OCI-LY7 (cell line): ENCODE measurements at regions of chr2 and their contacts with region 1.

Region 1: GRCh38 chr2:135573620-135574019 is 42.3 kb downstream of the R3HDM1 start:
- DNase-seq: no peak
- H3K4me3 ChIP-seq: no peak overlapping the region
- H3K27ac ChIP-seq: no peak overlapping the region
- H3K4me1 ChIP-seq: no peaks in the 10 kb centered on the region
- CTCF ChIP-seq: peak; percentile 61

Region 2: DNA sequence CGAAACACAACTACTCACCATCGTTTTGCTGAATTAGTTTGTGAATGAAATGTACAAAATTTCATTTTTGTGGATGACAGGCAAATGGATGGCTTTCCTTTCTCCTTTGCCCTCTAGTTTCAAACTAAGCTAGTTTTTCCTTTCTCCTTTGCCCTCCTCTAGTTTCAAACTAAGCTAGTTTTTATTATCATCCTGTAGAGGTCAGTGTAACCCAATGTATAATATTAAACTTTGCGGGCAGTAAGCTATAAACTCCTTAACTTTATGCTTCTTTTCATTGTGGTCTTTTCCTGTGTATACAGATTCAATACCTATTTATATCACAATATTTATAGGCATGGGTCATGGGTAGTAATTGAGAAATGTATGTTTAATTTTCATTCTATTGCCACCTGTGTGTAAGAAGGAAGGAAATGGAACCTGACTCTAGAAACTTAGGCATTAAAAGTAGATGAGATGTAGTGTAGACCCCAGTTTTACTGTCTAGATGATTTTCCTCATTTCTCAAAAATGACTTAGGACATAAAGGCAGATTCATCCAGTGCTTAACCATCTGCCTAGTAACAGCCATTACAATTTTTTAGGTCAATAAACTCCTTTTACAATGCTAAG is 584.5 kb before region 1 on chr2:
- CTCF ChIA-PET with region 1: no interaction called
- POLR2A ChIA-PET with region 1: no interaction called
- intact Hi-C with region 1: no loop called
- DNase-seq: peak; percentile 48
- H3K4me3 ChIP-seq: no peak overlapping the region
- H3K27ac ChIP-seq: no peak overlapping the region
- H3K4me1 ChIP-seq: no peaks in the 10 kb centered on the region
- CTCF ChIP-seq: peak; percentile 86

Region 3: GRCh38 chr2:135546436-135546835 is 27.2 kb before region 1 on chr2:
- CTCF ChIA-PET with region 1: no interaction called
- POLR2A ChIA-PET with region 1: interaction called, 10 read pairs
- intact Hi-C with region 1: no loop called
- DNase-seq: no peak
- H3K4me3 ChIP-seq: no peak overlapping the region
- H3K27ac ChIP-seq: no peak overlapping the region
- H3K4me1 ChIP-seq: no peaks in the 10 kb centered on the region
- CTCF ChIP-seq: no peak

Region 4: GRCh38 chr2:135585586-135585985 is 12.0 kb after region 1 on chr2:
- CTCF ChIA-PET with region 1: no interaction called
- POLR2A ChIA-PET with region 1: interaction called, 25 read pairs
- intact Hi-C with region 1: no loop called
- DNase-seq: peak; percentile 24
- H3K4me3 ChIP-seq: no peak overlapping the region
- H3K27ac ChIP-seq: peak overlapping the region; percentile 5
- H3K4me1 ChIP-seq: peaks cover 52% of the 10 kb centered on the region
- CTCF ChIP-seq: peak; percentile 56

Region 5: GRCh38 chr2:135709992-135710391 is 136.4 kb after region 1 on chr2:
- CTCF ChIA-PET with region 1: no interaction called
- POLR2A ChIA-PET with region 1: no interaction called
- intact Hi-C with region 1: loop called (anchors 10 kb)
- DNase-seq: peak; percentile 61
- H3K4me3 ChIP-seq: no peak overlapping the region
- H3K27ac ChIP-seq: no peak overlapping the region
- H3K4me1 ChIP-seq: no peaks in the 10 kb centered on the region
- CTCF ChIP-seq: peak; percentile 99

Region 6: DNA sequence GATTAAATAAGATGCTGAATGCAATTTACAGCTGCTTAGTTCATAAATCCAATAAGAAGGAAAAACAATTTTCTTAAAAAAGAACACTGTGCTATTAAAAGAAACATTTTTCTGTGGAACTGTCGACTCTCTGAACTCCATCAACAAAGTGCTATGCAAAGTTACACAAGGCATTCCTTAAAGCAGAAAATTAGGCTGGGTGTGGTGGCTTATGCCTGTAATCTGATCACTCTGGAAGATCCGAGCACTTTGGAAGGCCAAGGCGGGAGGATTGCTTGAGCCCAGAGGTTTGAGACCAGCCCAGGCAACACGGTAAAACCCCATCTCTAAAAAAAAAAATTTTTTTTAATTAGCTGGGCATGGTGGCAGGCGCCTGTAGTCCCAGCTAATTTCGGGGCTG is 289.6 kb after region 1 on chr2:
- CTCF ChIA-PET with region 1: no interaction called
- POLR2A ChIA-PET with region 1: no interaction called
- intact Hi-C with region 1: no loop called
- DNase-seq: no peak
- H3K4me3 ChIP-seq: no peak overlapping the region
- H3K27ac ChIP-seq: no peak overlapping the region
- H3K4me1 ChIP-seq: no peaks in the 10 kb centered on the region
- CTCF ChIP-seq: no peak